Right lobe of liver (tissue), 6 donors: ENCODE measurements at regions of chr13 and their contacts with region 1.

Region 1: GRCh38 chr13:98576963-98577822 is at the start of gene STK24:
- DNase-seq: peak; percentile 80 to 82 (median 81)
- ATAC-seq: peak; percentile 73 to 87 (median 81)
- H3K4me3 ChIP-seq: peak within 1 kb of the TSS; percentile 87 to 97 (median 91)
- H3K27ac ChIP-seq: peak within 1 kb of the TSS; percentile 93 to 97 (median 96)
- H3K4me1 ChIP-seq: peaks cover 0 to 31% (median 2%) of the 10 kb centered on the region in 4 donors
- H3K27me3 ChIP-seq: no peaks in the 10 kb centered on the region
- CTCF ChIP-seq: peak in 1 of 4 donors; percentile 12
- POLR2A ChIP-seq: peak; percentile 62
- total RNA-seq, gene STK24: 14.8 to 40.8 (median 28.6) TPM

Region 2: DNA sequence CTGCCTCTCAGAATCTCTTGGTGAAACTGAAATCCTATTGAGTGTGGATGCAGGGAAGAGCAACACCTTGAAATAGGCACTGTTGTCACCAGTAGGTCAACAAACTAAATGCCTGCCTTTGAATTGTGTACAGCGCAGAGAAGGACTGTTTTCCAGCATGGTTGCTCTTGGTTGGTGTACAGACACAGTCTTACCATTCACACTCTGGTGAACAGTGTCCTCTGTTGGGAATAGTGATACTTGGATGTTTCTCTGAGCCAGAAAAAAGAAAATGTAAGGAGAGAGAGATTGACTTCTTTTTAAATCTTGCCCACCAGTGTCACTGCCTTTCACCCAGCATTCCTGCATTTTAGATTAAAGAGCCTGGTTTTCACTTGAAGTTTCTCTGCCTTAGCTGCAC is 180.0 kb before region 1 on chr13:
- intact Hi-C with region 1: no loop called
- DNase-seq: no peak
- ATAC-seq: peak; percentile 31 to 49 (median 42)
- H3K4me3 ChIP-seq: no peak overlapping the region
- H3K27ac ChIP-seq: no peak overlapping the region
- H3K4me1 ChIP-seq: no peaks in the 10 kb centered on the region
- H3K27me3 ChIP-seq: no peaks in the 10 kb centered on the region
- CTCF ChIP-seq: peak; percentile 5 to 25 (median 18)
- POLR2A ChIP-seq: no peak

Region 3: GRCh38 chr13:98648141-98648540 is 70.9 kb after region 1 on chr13:
- intact Hi-C with region 1: loop called (anchors 10 kb)
- DNase-seq: no peak
- ATAC-seq: peak; percentile 63 to 78 (median 70)
- H3K4me3 ChIP-seq: no peak overlapping the region
- H3K27ac ChIP-seq: no peak overlapping the region
- H3K4me1 ChIP-seq: peaks cover 0 to 7% (median 4%) of the 10 kb centered on the region in 4 donors
- H3K27me3 ChIP-seq: no peaks in the 10 kb centered on the region
- CTCF ChIP-seq: no peak
- POLR2A ChIP-seq: no peak

Region 4: DNA sequence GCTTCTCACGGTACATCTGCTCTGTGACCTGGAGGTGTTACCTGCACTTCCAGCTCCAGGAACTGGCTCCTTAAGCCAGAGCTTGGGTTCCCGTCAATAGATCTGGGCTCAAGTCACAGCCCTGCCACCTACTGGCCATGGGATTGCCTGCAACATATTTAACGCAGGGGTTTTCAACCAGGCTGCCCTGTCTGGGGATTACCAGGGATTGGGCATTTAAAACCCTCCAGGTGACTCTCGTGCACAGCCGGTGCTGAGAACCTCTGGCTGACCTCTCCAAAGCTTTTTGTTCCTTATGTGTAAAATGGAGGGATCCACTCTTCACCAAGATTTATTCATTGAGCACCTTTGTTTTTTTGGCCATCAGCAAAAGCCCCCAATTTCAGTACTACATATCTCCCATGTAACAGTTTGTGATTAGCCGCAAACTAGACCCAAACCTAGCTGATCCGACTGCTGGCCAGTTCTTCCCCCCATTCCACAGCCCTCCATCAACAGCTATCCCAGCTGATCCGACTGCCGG is 76.3 kb after region 1 on chr13:
- intact Hi-C with region 1: loop called (anchors 10 kb)
- DNase-seq: peak; percentile 73 to 82 (median 76)
- ATAC-seq: peak; percentile 94 to 97 (median 96)
- H3K4me3 ChIP-seq: no peak overlapping the region
- H3K27ac ChIP-seq: no peak overlapping the region
- H3K4me1 ChIP-seq: peaks cover 0 to 2% (median under 1%) of the 10 kb centered on the region in 4 donors
- H3K27me3 ChIP-seq: no peaks in the 10 kb centered on the region
- CTCF ChIP-seq: peak; percentile 87 to 93 (median 89)
- POLR2A ChIP-seq: no peak